Prostate gland (tissue), 2 donors: ENCODE measurements at regions of chr2 and their contacts with region 1.

Region 1: GRCh38 chr2:181742922-181743722 is 62.8 kb upstream of the NEUROD1 start:
- DNase-seq: peak; percentile 25
- H3K4me3 ChIP-seq: no peak overlapping the region
- H3K27ac ChIP-seq: no peak overlapping the region
- H3K4me1 ChIP-seq: no peaks in the 10 kb centered on the region
- H3K27me3 ChIP-seq: no peaks in the 10 kb centered on the region
- CTCF ChIP-seq: peak; percentile 33 to 77 (median 61)
- POLR2A ChIP-seq: no peak

Region 2: GRCh38 chr2:181607629-181608590 is 135.2 kb before region 1 on chr2:
- intact Hi-C with region 1: no loop called
- DNase-seq: no peak
- H3K4me3 ChIP-seq: no peak overlapping the region
- H3K27ac ChIP-seq: no peak overlapping the region
- H3K4me1 ChIP-seq: no peaks in the 10 kb centered on the region
- H3K27me3 ChIP-seq: no peaks in the 10 kb centered on the region
- CTCF ChIP-seq: no peak
- POLR2A ChIP-seq: no peak

Region 3: DNA sequence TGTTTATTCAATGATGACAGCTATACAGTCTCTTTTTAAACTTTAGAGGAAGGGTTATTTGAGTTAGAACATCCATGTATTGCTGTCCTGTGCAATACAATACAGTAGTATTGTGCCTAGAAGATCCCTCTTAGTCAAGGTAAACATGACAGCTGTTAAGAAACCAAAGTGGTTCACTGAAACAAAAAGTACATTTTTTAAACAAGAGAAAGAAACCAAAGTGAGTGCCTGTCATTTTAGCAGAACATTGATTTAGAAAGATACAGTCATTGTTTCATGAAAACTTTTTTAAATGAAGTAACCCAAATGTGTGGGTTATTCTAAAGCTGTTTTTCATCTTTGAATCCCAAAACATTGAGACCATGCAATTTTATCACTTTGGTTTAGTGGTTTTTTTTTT is 163.9 kb after region 1 on chr2:
- intact Hi-C with region 1: loop called (anchors 5 kb)
- DNase-seq: no peak
- H3K4me3 ChIP-seq: no peak overlapping the region
- H3K27ac ChIP-seq: no peak overlapping the region
- H3K4me1 ChIP-seq: peaks cover 6% of the 10 kb centered on the region
- H3K27me3 ChIP-seq: no peaks in the 10 kb centered on the region
- CTCF ChIP-seq: no peak
- POLR2A ChIP-seq: no peak

Region 4: DNA sequence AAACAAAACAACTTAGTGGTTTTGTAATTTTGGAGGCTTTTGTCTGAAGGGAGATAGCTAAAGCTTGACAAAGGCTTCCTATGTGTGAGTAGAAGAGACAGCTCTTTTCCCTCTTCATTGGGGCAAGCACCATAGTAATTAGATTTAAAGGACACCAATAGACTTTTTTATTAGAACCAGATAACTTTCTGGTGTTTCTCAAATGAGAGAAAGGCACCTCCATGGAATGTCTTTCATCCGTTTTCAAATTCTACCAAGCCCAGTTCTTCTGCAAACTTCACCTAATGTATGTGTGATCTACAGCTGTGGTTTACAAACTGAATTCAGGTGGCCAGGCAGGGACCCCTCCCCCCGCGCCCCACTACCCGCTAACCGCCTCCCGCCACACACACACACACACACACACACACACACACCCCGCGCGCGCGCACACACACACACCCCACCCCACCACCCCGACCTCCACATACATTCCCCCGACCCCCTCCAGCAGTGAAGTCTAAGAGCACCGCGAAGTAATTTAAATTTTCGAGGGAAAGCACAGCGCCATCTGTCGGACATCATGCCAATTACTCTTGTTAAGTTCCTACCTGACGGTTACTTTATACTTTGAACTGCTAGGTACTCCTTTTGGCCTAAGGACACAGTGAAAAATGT is 210.9 kb after region 1 on chr2:
- intact Hi-C with region 1: loop called (anchors 10 kb)
- DNase-seq: peak; percentile 61
- H3K4me3 ChIP-seq: peak overlapping the region in 1 of 2 donors; percentile 8
- H3K27ac ChIP-seq: no peak overlapping the region
- H3K4me1 ChIP-seq: no peaks in the 10 kb centered on the region
- H3K27me3 ChIP-seq: no peaks in the 10 kb centered on the region
- CTCF ChIP-seq: peak; percentile 39 to 77 (median 48)
- POLR2A ChIP-seq: no peak

Region 5: DNA sequence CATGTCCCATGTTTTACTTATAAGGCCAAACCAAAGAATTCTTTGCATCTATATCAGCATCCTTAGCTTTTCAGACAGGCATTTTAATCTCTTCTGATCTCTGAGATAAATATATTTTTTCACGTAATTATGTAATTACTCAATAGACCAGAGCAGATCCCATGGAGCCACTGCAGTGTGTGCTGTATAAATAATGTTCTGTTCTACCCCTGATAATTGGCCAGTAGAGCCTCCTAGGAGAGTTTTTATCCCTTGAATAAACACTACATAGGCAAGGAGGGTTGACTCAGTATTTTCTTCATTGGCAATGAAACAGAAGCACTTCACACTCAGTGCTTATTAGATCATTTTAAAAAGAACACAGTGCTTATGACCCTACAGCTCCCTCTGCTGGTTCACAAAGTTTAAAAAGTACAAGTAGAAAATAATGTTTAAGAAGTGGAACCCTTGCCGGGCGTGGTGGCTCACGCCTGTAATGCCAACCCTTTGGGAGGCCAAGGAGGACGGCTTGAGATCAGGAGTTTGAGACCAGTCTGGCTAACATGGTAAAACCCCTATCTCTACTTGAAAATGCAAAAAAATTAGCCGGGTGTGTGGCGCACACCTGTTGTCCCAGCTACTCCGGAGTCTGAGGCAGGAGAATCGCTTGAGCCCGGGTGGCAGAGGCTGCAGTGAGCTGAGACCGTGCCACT is 334.5 kb after region 1 on chr2:
- intact Hi-C with region 1: loop called (anchors 2 kb)
- DNase-seq: peak; percentile 50
- H3K4me3 ChIP-seq: no peak overlapping the region
- H3K27ac ChIP-seq: no peak overlapping the region
- H3K4me1 ChIP-seq: no peaks in the 10 kb centered on the region
- H3K27me3 ChIP-seq: no peaks in the 10 kb centered on the region
- CTCF ChIP-seq: peak; percentile 46 to 68 (median 62)
- POLR2A ChIP-seq: no peak